ENCODE measurements at regions of chr10 and their contacts with region 1.

Region 1: DNA sequence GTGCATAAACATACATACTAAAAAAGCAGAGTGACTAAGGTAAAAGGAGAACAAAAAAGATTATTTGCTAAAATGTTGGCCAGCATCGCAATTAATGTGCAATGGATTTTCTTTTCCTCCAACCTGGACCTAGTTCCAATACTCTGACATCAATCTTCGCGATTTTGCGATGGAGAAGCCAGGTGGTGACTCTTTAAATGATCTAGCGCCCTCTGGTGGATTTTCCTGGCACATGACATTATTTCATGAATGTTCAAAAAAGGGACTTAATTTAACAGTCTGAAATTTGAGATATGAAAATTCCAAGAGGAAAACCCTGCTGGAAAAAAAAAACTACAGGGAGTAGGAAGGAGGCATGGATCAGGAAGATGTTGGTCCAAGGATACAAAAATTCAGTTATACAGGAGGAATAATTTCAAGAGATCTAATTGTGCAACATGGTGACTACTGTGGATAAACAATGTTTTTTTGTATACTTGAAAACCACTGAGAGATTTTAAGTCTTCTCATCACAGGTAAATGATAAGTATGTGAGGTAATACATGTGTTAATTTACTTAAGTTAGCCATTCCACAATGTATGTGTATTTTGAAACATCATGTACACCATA is 4.3 kb upstream of the KCNMA1 start:
- DNase-seq: peak; percentile 45
- H3K4me3 ChIP-seq: no peak overlapping the region
- CTCF ChIP-seq: peak; percentile 50

Region 2: DNA sequence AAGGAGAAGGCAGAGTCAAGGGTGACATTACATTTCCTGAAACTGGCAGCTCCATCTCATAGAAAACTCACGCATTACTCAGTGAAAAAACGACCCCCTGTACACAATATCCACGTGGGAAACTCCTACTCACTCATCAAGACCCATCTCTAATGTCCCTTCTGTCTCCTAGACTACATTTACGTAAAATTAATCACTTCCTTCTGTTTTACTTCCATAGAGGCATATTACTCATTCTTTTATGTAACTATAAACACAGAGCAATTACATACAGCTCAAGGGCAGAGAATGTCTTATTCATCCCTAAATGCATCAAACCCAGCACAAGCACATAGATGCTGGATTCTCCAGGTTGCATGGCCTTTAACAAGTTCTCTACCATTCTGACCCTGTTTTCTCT is 286.0 kb before region 1 on chr10:
- CTCF ChIA-PET with region 1: interaction called, 10 read pairs
- POLR2A ChIA-PET with region 1: no interaction called
- DNase-seq: peak; percentile 87
- H3K4me3 ChIP-seq: no peak overlapping the region
- CTCF ChIP-seq: no peak

Region 3: GRCh38 chr10:77416311-77417135 is 225.4 kb before region 1 on chr10:
- CTCF ChIA-PET with region 1: interaction called, 12 read pairs
- POLR2A ChIA-PET with region 1: no interaction called
- DNase-seq: peak; percentile 86
- H3K4me3 ChIP-seq: peak overlapping the region; percentile 3; the same call in 1 of the 2 replicates
- CTCF ChIP-seq: no peak

Region 4: DNA sequence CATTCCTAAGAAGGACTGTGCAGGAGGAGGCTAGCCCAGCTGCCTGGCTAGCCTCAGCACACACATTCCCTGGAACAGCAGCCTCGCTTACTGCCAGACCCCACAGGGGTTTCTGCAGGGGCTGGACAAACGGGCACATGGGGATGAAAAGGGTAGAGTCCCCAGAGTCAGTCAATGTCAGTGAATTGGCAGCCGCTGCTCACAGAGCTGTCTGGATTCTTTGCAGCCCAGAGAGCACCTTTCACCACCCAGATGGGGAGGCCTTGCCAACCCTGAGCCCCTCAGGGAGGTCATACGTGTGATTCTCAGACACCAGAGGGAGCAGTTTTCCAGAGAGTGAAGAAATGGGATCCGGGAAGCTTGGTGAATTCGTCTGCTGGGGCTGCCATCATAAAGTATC is 147.6 kb before region 1 on chr10:
- CTCF ChIA-PET with region 1: interaction called, 72 read pairs
- POLR2A ChIA-PET with region 1: no interaction called
- DNase-seq: no peak
- H3K4me3 ChIP-seq: no peak overlapping the region
- CTCF ChIP-seq: peak; percentile 27

Region 5: GRCh38 chr10:77628906-77629730 is 12.8 kb before region 1 on chr10:
- CTCF ChIA-PET with region 1: interaction called, 21 read pairs
- POLR2A ChIA-PET with region 1: no interaction called
- DNase-seq: no peak
- H3K4me3 ChIP-seq: no peak overlapping the region
- CTCF ChIP-seq: no peak

Region 6: GRCh38 chr10:77756319-77757232 is 114.7 kb after region 1 on chr10:
- CTCF ChIA-PET with region 1: interaction called, 14 read pairs
- POLR2A ChIA-PET with region 1: no interaction called
- DNase-seq: no peak
- H3K4me3 ChIP-seq: no peak overlapping the region
- CTCF ChIP-seq: peak; percentile 79

Region 7: DNA sequence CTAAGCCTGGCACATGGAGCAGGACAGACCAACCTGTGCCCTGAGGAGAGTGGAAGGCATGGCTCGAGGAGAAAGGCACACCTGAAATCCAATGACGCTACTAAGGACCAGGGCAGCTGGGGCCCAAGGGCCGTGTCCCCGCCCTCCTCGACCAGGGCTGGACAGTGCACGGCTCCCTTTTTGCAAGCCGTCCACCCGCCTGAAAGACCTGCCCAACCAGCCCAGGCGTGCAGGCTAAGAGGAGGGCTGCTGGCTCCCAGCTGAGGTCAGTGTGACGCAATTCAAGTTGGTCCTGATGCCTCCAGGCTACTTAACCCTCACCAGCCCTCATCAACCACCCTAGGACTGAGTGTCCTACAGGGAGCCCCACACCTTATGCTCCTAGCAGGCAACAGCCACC is 215.4 kb after region 1 on chr10:
- CTCF ChIA-PET with region 1: no interaction called
- POLR2A ChIA-PET with region 1: no interaction called
- DNase-seq: no peak
- H3K4me3 ChIP-seq: no peak overlapping the region
- CTCF ChIP-seq: no peak

Region 8: GRCh38 chr10:79068562-79069324 is 1426.8 kb after region 1 on chr10 and contains the start of gene ZMIZ1:
- CTCF ChIA-PET with region 1: no interaction called
- POLR2A ChIA-PET with region 1: no interaction called
- DNase-seq: peak; percentile 65
- H3K4me3 ChIP-seq: peak within 1 kb of the TSS; percentile 95
- CTCF ChIP-seq: peak; percentile 12

Measured in AG04449 (cell line).